Activated CD8-positive, alpha-beta T cell treated with anti-CD3 and anti-CD28 coated beads for 36 hours (primary cell): ENCODE measurements at regions of chr15 and their contacts with region 1.

Region 1: GRCh38 chr15:82108489-82109078 is 62.8 kb upstream of the MEX3B start:
- DNase-seq: peak; percentile 81
- ATAC-seq: peak; percentile 100
- H3K4me3 Mint-ChIP-seq: no peak overlapping the region
- H3K27ac Mint-ChIP-seq: no peak overlapping the region
- H3K4me1 Mint-ChIP-seq: no peaks in the 10 kb centered on the region
- H3K27me3 Mint-ChIP-seq: no peaks in the 10 kb centered on the region
- CTCF ChIP-seq: peak; percentile 81

Region 2: GRCh38 chr15:82139823-82140268 is 31.3 kb after region 1 on chr15:
- CTCF ChIA-PET with region 1: interaction called, 10 read pairs
- POLR2A ChIA-PET with region 1: no interaction called
- intact Hi-C with region 1: no loop called
- DNase-seq: no peak
- ATAC-seq: no peak
- H3K4me3 Mint-ChIP-seq: no peak overlapping the region
- H3K27ac Mint-ChIP-seq: no peak overlapping the region
- H3K4me1 Mint-ChIP-seq: peaks cover 7% of the 10 kb centered on the region
- H3K27me3 Mint-ChIP-seq: no peaks in the 10 kb centered on the region
- CTCF ChIP-seq: peak; percentile 63

Region 3: DNA sequence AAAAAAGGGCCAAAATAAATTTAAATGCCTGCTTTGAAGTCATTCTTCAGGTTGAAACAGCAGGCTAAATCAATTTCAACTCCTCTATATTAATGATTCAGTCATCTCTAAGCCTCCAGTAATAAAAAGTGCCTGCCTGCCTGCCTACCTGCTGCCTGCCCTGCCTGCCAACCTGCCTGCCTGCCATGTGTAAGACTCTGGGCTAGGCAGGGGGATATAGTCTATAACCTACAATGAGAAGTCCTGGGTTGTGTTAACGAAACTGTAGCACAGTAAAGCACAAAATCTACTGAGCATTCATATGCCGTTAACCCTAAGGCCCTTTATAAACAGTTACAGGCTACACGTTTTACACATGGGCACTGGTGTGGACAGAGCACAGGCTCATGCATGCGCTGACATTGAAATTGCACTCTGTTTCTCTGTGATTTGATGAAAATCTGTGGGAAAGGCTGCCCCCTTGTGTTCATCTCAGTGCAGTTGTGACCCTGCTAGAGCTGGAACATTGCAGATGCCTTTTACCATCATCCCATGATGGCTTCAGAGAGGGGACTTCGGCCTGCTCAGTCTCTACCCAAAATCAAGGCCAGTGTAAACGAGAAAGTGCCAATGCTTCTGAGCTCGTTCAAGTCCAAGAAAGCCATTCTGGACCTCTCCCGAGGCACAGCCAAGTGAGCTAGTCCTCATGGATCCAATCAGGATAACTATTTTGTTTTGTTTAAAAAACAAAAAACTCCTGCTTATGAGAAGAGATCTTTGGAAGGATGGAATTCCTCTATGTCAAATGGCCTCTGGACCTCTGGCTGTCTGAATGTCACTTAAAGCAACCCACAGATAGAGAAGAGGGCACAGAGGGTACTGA is 89.4 kb after region 1 on chr15:
- CTCF ChIA-PET with region 1: interaction called, 15 read pairs
- POLR2A ChIA-PET with region 1: no interaction called
- intact Hi-C with region 1: loop called (anchors 5 kb)
- DNase-seq: peak; percentile 80
- ATAC-seq: peak; percentile 84
- H3K4me3 Mint-ChIP-seq: no peak overlapping the region
- H3K27ac Mint-ChIP-seq: no peak overlapping the region
- H3K4me1 Mint-ChIP-seq: no peaks in the 10 kb centered on the region
- H3K27me3 Mint-ChIP-seq: no peaks in the 10 kb centered on the region
- CTCF ChIP-seq: peak; percentile 71